Ascending aorta (tissue), 2 donors: ENCODE measurements at regions of chr11 and their contacts with region 1.

Region 1: GRCh38 chr11:100682247-100682969 is 4.7 kb upstream of the ARHGAP42 start:
- DNase-seq: no peak
- H3K4me3 ChIP-seq: no peak overlapping the region
- H3K27ac ChIP-seq: no peak overlapping the region
- H3K4me1 ChIP-seq: peaks cover 0 to 2% of the 10 kb centered on the region in 2 donors
- H3K27me3 ChIP-seq: no peaks in the 10 kb centered on the region
- CTCF ChIP-seq: peak in 2 of 3 experiments; percentile 38 to 52

Region 2: DNA sequence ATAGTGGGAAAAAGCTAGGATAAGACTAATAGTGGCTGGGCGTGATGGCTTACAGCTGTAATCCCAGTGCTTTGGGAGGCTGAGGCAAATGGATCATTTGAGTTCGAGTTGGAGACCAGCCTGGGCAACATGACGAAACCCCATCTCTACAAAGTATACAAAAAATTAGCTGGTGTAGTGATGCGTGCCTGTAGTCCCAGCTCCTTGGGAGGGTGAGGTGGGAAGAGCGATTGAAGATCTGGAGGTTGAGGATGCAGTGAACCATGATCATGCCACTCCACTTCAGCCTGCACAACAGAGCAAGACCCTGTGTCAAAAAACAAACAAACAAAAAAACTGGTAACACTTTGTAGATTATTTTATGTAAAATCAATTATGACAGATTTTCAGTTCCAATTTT is 13.5 kb after region 1 on chr11:
- intact Hi-C with region 1: no loop called
- DNase-seq: no peak
- H3K4me3 ChIP-seq: no peak overlapping the region
- H3K27ac ChIP-seq: no peak overlapping the region
- H3K4me1 ChIP-seq: no peaks in the 10 kb centered on the region
- H3K27me3 ChIP-seq: no peaks in the 10 kb centered on the region
- CTCF ChIP-seq: no peak

Region 3: DNA sequence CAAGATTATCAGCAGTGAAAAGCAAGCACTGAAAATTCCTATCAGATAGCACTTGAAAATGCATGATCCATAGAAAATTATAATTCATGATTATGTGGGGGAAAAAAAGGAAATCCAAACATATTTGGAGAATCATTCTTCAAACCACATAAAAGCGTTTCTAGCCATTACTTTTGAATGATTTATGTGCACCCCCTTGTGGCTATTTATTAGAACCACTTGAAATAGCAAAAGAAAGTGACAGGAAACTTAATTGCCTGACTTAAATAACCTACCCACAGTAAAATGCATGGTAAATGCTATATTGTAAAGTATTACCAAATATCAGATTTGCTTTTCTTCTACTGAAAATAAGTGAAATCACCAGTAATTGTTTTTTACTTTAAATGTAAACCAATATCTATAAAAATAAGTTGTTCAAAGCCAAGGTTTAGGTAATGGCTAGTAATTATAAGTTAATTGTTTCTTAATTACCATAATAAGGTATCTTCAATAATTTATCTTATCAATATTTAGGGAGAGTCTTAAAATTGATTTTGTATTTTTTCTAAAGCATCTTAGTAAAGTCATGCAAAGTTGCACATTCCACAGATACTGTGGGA is 173.2 kb after region 1 on chr11:
- intact Hi-C with region 1: loop called (anchors 1 kb)
- DNase-seq: no peak
- H3K4me3 ChIP-seq: no peak overlapping the region
- H3K27ac ChIP-seq: no peak overlapping the region
- H3K4me1 ChIP-seq: no peaks in the 10 kb centered on the region
- H3K27me3 ChIP-seq: no peaks in the 10 kb centered on the region
- CTCF ChIP-seq: peak in 2 of 3 experiments; percentile 47 to 56

Region 4: GRCh38 chr11:100890789-100891188 is 208.4 kb after region 1 on chr11:
- intact Hi-C with region 1: no loop called
- DNase-seq: no peak
- H3K4me3 ChIP-seq: no peak overlapping the region
- H3K27ac ChIP-seq: no peak overlapping the region
- H3K4me1 ChIP-seq: no peaks in the 10 kb centered on the region
- H3K27me3 ChIP-seq: no peaks in the 10 kb centered on the region
- CTCF ChIP-seq: no peak

Region 5: GRCh38 chr11:100930185-100930778 is 247.9 kb after region 1 on chr11:
- intact Hi-C with region 1: loop called (anchors 2 kb)
- DNase-seq: no peak
- H3K4me3 ChIP-seq: no peak overlapping the region
- H3K27ac ChIP-seq: no peak overlapping the region
- H3K4me1 ChIP-seq: no peaks in the 10 kb centered on the region
- H3K27me3 ChIP-seq: no peaks in the 10 kb centered on the region
- CTCF ChIP-seq: peak; percentile 39 to 66 (median 60)